Dendritic cell treated with granulocyte-macrophage colony-stimulating factor and Interleukin-4, amounts not matched to agents 40 ng/mL and 50 ng/mL, for 4 days (primary cell): ENCODE measurements at regions of chr16 and their contacts with region 1.

Region 1: DNA sequence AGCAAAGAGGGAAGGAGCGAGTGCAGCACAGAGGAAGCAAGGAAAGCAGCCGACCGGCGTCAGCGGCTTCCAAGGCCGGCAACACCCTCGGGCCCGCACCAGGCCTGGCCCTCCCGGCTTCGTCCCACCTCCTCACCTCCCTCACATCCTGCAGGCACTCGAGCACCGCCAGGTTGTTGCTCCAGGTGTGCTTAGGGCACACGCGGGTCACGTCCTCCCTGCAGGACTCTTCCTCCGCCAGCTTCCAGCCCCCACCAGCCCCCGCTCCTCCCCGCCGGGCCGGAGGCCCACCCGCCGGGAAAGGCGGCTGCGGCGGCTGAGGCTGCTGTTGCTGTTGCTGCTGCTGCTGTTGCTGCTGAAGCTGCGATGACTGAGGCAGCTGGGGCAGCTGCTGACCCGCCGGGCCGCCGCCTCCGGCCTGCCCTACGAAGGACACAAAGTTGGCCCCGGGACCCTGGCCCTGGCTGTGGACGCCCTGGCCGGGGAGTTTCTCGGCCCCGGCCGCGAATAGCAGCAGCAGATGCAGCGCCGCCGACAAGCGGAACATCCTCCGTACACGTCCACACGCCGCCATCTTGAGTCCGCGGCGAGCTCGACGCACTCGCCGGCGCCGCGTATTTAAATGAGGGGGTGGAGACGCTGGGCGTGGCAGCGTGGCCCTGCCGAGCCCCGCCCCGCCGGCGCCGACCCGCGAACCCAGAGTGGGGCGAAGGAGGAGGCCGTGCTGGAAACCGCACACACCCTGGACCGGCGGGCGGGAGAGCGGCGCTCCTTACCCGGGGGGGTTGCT is at the start of gene GLG1:
- H3K4me3 Mint-ChIP-seq: peak within 1 kb of the TSS; percentile 100
- H3K27ac Mint-ChIP-seq: peak within 1 kb of the TSS; percentile 95
- H3K4me1 Mint-ChIP-seq: peaks cover 35% of the 10 kb centered on the region
- H3K27me3 Mint-ChIP-seq: peaks cover 14% of the 10 kb centered on the region

Region 2: DNA sequence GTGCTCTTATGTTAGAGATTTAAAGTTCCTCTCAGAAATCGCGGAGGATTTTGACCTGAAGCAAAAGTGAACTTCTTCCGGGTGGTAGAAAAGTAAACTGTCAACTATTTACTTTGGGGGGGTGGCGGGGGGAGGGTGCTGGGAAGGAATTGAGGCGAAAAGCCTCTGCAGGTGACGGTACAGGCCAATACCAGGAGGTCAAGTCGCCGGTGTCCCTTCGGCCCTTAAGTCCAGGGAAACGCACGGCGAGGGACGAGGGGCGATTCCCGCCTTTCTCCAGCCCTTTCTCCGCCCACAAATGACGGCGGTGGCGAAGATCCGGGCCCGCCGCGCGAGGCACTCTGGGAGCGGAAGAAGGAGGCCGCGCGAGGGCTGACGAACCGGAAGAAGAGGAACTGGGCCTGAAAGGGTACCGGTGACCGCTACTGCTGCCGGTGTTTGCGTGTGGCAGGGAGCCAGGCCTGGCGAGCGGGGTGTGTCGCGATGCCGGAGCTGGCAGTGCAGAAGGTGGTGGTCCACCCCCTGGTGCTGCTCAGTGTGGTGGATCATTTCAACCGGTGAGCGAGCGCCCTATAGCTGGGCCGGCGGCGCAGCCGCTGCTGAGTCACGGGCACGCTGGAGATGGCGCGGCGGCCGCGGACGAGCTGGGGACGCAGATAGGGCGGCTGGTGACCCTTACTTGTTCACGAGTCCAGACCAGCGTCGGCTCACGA is 310.1 kb before region 1 on chr16 and contains the start of gene PSMD7:
- intact Hi-C with region 1: loop called (anchors 10 kb)
- H3K4me3 Mint-ChIP-seq: peak within 1 kb of the TSS; percentile 94
- H3K27ac Mint-ChIP-seq: peak within 1 kb of the TSS; percentile 98
- H3K4me1 Mint-ChIP-seq: peaks cover 31% of the 10 kb centered on the region
- H3K27me3 Mint-ChIP-seq: no peaks in the 10 kb centered on the region

Region 3: GRCh38 chr16:74504986-74505385 is 101.7 kb before region 1 on chr16:
- intact Hi-C with region 1: loop called (anchors 5 kb)
- H3K4me3 Mint-ChIP-seq: no peak overlapping the region
- H3K27ac Mint-ChIP-seq: no peak overlapping the region
- H3K4me1 Mint-ChIP-seq: peaks cover 22% of the 10 kb centered on the region
- H3K27me3 Mint-ChIP-seq: no peaks in the 10 kb centered on the region

Region 4: GRCh38 chr16:74641969-74642368 is 35.3 kb after region 1 on chr16:
- intact Hi-C with region 1: no loop called
- H3K4me3 Mint-ChIP-seq: no peak overlapping the region
- H3K27ac Mint-ChIP-seq: no peak overlapping the region
- H3K4me1 Mint-ChIP-seq: no peaks in the 10 kb centered on the region
- H3K27me3 Mint-ChIP-seq: no peaks in the 10 kb centered on the region